T-cell (primary cell): ENCODE measurements at regions of chr3 and their contacts with region 1.

Region 1: DNA sequence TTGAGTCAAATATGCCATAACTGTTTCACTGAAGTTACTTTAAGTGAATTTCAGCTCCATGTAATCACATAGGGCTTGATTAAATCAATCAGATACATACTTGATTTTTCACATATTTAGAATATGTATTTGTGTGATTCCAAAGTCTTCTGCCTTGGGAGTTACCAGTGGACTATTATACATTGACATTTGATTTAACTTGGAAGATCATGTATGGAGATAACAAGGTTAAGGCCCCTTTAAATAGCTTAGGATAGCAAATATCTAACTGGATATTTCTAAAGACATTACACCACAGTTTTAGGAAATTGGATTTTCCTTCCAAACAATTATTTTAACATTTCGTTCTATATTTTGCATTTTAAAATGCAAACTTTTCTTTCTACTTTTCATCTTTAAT is 405.0 kb downstream of the RAP2B start:
- DNase-seq: no peak
- ATAC-seq: no peak
- H3K4me3 ChIP-seq: no peak overlapping the region
- H3K4me3 Mint-ChIP-seq: no peak overlapping the region
- H3K27ac ChIP-seq: no peak overlapping the region
- H3K27ac Mint-ChIP-seq: no peak overlapping the region
- H3K4me1 ChIP-seq: no peaks in the 10 kb centered on the region
- H3K4me1 Mint-ChIP-seq: no peaks in the 10 kb centered on the region
- H3K27me3 ChIP-seq: no peaks in the 10 kb centered on the region
- H3K27me3 Mint-ChIP-seq: no peaks in the 10 kb centered on the region

Region 2: GRCh38 chr3:153043729-153044328 is 523.2 kb before region 1 on chr3:
- CTCF ChIA-PET with region 1: interaction called, 3 to 10 read pairs
- POLR2A ChIA-PET with region 1: no interaction called
- DNase-seq: no peak
- ATAC-seq: no peak
- H3K4me3 ChIP-seq: no peak overlapping the region
- H3K4me3 Mint-ChIP-seq: no peak overlapping the region
- H3K27ac ChIP-seq: no peak overlapping the region
- H3K27ac Mint-ChIP-seq: no peak overlapping the region
- H3K4me1 ChIP-seq: no peaks in the 10 kb centered on the region
- H3K4me1 Mint-ChIP-seq: peaks cover 0 to 5% (median 3%) of the 10 kb centered on the region in 3 donors
- H3K27me3 ChIP-seq: no peaks in the 10 kb centered on the region
- H3K27me3 Mint-ChIP-seq: peaks cover 0 to 3% of the 10 kb centered on the region in 2 donors

Region 3: GRCh38 chr3:153595186-153595815 is 28.3 kb after region 1 on chr3:
- CTCF ChIA-PET with region 1: no interaction called
- POLR2A ChIA-PET with region 1: no interaction called
- DNase-seq: peak in 1 of 35 experiments; percentile 50
- ATAC-seq: peak in 3 of 4 experiments; percentile 34 to 50 (median 36)
- H3K4me3 ChIP-seq: no peak overlapping the region
- H3K4me3 Mint-ChIP-seq: no peak overlapping the region
- H3K27ac ChIP-seq: no peak overlapping the region
- H3K27ac Mint-ChIP-seq: peak overlapping the region in 1 of 2 donors; percentile 35
- H3K4me1 ChIP-seq: no peaks in the 10 kb centered on the region
- H3K4me1 Mint-ChIP-seq: peaks cover 0 to 9% (median 5%) of the 10 kb centered on the region in 3 donors
- H3K27me3 ChIP-seq: no peaks in the 10 kb centered on the region
- H3K27me3 Mint-ChIP-seq: no peaks in the 10 kb centered on the region